ENCODE measurements at regions of chr22 and their contacts with region 1.

Region 1: GRCh38 chr22:22431271-22432220 is 77.0 kb downstream of the ZNF280B start:
- DNase-seq: peak; percentile 88
- ATAC-seq: peak; percentile 92
- H3K4me3 ChIP-seq: no peak overlapping the region
- H3K4me3 Mint-ChIP-seq: no peak overlapping the region
- H3K27ac ChIP-seq: peak overlapping the region; percentile 54
- H3K27ac Mint-ChIP-seq: peak overlapping the region; percentile 90
- H3K4me1 ChIP-seq: peaks cover 43 to 56% of the 10 kb centered on the region in 2 donors
- H3K4me1 Mint-ChIP-seq: peaks cover 61% of the 10 kb centered on the region
- H3K27me3 ChIP-seq: no peaks in the 10 kb centered on the region
- H3K27me3 Mint-ChIP-seq: no peaks in the 10 kb centered on the region
- CTCF ChIP-seq: peak; percentile 76

Region 2: GRCh38 chr22:22371031-22371541 is 60.5 kb before region 1 on chr22:
- CTCF ChIA-PET with region 1: interaction called, 16 read pairs
- POLR2A ChIA-PET with region 1: no interaction called
- intact Hi-C with region 1: no loop called
- DNase-seq: no peak
- ATAC-seq: no peak
- H3K4me3 ChIP-seq: no peak overlapping the region
- H3K4me3 Mint-ChIP-seq: peak overlapping the region; percentile 29
- H3K27ac ChIP-seq: no peak overlapping the region
- H3K27ac Mint-ChIP-seq: peak overlapping the region; percentile 64
- H3K4me1 ChIP-seq: peaks cover 73 to 76% of the 10 kb centered on the region in 2 donors
- H3K4me1 Mint-ChIP-seq: peaks cover 87% of the 10 kb centered on the region
- H3K27me3 ChIP-seq: no peaks in the 10 kb centered on the region
- H3K27me3 Mint-ChIP-seq: no peaks in the 10 kb centered on the region
- CTCF ChIP-seq: no peak

Region 3: GRCh38 chr22:22450343-22450839 is 18.8 kb after region 1 on chr22:
- CTCF ChIA-PET with region 1: interaction called, 29 read pairs
- POLR2A ChIA-PET with region 1: no interaction called
- intact Hi-C with region 1: loop called (anchors 1 kb)
- DNase-seq: peak; percentile 90
- ATAC-seq: peak; percentile 97
- H3K4me3 ChIP-seq: no peak overlapping the region
- H3K4me3 Mint-ChIP-seq: peak overlapping the region; percentile 59
- H3K27ac ChIP-seq: peak overlapping the region; percentile 36 to 76
- H3K27ac Mint-ChIP-seq: peak overlapping the region; percentile 78
- H3K4me1 ChIP-seq: peaks cover 30 to 32% of the 10 kb centered on the region in 2 donors
- H3K4me1 Mint-ChIP-seq: peaks cover 33% of the 10 kb centered on the region
- H3K27me3 ChIP-seq: no peaks in the 10 kb centered on the region
- H3K27me3 Mint-ChIP-seq: no peaks in the 10 kb centered on the region
- CTCF ChIP-seq: peak; percentile 31

Region 4: DNA sequence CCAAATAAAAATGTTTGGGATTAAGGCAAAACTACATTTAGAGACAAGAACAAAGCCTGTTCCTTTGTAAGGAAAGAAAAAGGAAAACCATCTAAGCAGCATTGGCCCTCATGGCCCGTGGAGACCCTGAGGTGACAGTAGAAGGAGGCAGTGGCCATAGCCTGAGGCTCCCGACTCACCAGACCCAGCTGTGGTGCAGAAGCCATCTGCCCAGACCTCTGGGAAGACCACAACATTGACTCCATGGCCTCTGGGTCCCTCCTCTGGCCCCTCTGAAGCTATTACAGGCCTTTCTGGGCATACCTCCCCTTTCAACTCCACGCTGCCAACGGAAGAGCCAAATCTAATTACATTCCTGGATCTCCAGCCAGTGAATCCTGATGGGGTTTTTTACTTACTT is 121.1 kb after region 1 on chr22:
- CTCF ChIA-PET with region 1: interaction called, 7 read pairs
- POLR2A ChIA-PET with region 1: no interaction called
- intact Hi-C with region 1: loop called (anchors 1 kb)
- DNase-seq: peak; percentile 28
- ATAC-seq: no peak
- H3K4me3 ChIP-seq: no peak overlapping the region
- H3K4me3 Mint-ChIP-seq: no peak overlapping the region
- H3K27ac ChIP-seq: no peak overlapping the region
- H3K27ac Mint-ChIP-seq: no peak overlapping the region
- H3K4me1 ChIP-seq: peaks cover 0 to 6% of the 10 kb centered on the region in 2 donors
- H3K4me1 Mint-ChIP-seq: peaks cover 6% of the 10 kb centered on the region
- H3K27me3 ChIP-seq: no peaks in the 10 kb centered on the region
- H3K27me3 Mint-ChIP-seq: no peaks in the 10 kb centered on the region
- CTCF ChIP-seq: no peak

Region 5: DNA sequence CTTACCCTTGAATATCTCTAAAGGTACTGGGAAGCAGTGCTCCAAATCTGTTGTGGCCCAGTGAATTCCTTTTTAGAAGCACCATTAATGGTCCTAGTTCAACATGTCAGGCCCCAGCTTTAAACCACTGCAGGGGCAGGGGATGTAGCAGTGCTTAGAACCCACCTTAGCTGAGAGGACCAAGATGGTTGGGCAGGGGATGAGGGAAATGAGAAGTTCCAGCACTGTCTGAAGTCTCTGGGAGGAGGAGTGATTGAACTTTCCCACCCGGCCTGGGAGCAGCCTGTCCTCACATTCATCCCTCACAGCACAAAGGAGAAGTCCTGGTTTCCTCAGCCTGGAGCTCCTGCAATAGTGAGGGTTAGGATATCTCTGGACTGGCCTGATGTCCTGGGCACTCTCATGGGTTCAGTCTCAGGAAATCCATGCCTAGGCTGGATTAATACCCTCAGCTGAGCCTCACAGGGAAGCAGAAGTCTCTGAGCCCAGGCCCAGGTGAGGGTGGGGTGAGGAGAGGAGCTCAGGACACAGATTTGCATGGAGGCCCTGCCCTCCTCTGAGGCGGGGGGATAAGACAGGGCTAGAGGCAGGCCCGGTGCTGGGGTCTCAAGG is 156.1 kb after region 1 on chr22:
- CTCF ChIA-PET with region 1: interaction called, 66 read pairs
- POLR2A ChIA-PET with region 1: no interaction called
- intact Hi-C with region 1: loop called (anchors 2 kb)
- DNase-seq: no peak
- ATAC-seq: no peak
- H3K4me3 ChIP-seq: no peak overlapping the region
- H3K4me3 Mint-ChIP-seq: no peak overlapping the region
- H3K27ac ChIP-seq: peak overlapping the region in 1 of 2 donors; percentile 23
- H3K27ac Mint-ChIP-seq: no peak overlapping the region
- H3K4me1 ChIP-seq: peaks cover 36 to 38% of the 10 kb centered on the region in 2 donors
- H3K4me1 Mint-ChIP-seq: peaks cover 33% of the 10 kb centered on the region
- H3K27me3 ChIP-seq: no peaks in the 10 kb centered on the region
- H3K27me3 Mint-ChIP-seq: no peaks in the 10 kb centered on the region
- CTCF ChIP-seq: no peak

Measured in B cell (primary cell).